ENCODE measurements at regions of chr3 and their contacts with region 1.

Region 1: DNA sequence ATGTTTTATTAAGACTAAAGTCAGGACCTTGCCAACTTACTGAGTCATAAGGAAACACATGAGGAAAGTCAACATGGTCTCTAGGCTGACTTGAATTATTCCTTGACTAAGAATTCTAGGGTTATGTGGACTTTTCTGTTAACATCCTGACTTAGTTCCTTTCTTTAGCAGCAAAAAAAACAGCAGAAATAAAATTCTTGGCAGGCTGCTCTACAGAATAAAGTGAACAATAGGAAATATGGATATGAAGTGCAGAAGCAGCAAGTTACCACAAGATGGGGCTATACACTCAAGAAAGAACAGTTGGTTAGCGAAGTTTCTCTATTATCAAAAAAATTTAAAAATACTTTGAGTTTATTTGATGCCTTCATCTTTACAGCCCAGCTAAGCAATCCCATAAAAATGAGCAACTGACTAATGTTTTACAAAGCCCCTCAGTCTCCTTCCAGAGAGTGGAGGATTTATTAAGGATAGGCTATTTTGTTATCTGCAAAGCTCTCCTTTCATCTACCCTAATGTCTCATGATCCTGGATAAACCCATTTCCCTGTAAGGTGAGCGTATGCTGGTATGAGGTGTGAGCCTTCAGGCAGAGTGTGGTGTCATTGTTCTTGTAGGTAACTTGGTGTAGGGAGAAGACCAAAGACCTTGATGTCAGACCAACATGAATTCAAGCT is 23.1 kb upstream of the MCCC1 start:
- DNase-seq: peak; percentile 70
- ATAC-seq: peak; percentile 60
- H3K4me3 ChIP-seq: no peak overlapping the region
- H3K4me3 Mint-ChIP-seq: no peak overlapping the region
- H3K27ac ChIP-seq: no peak overlapping the region
- H3K27ac Mint-ChIP-seq: no peak overlapping the region
- H3K4me1 ChIP-seq: no peaks in the 10 kb centered on the region
- H3K4me1 Mint-ChIP-seq: peaks cover under 1% of the 10 kb centered on the region
- H3K27me3 ChIP-seq: peaks cover 0 to 45% (median 33%) of the 10 kb centered on the region in 4 experiments
- H3K27me3 Mint-ChIP-seq: peaks cover 50% of the 10 kb centered on the region
- CTCF ChIP-seq: peak; percentile 97

Region 2: GRCh38 chr3:183178629-183179549 is 56.5 kb after region 1 on chr3:
- CTCF ChIA-PET with region 1: interaction called, 72 read pairs
- POLR2A ChIA-PET with region 1: no interaction called
- intact Hi-C with region 1: no loop called
- DNase-seq: peak; percentile 52
- ATAC-seq: peak; percentile 51
- H3K4me3 ChIP-seq: peak overlapping the region in 3 of 5 experiments; percentile 11 to 23 (median 15)
- H3K4me3 Mint-ChIP-seq: peak overlapping the region; percentile 82
- H3K27ac ChIP-seq: no peak overlapping the region
- H3K27ac Mint-ChIP-seq: no peak overlapping the region
- H3K4me1 ChIP-seq: peaks cover 18 to 24% of the 10 kb centered on the region in 2 donors
- H3K4me1 Mint-ChIP-seq: peaks cover 14% of the 10 kb centered on the region
- H3K27me3 ChIP-seq: peaks cover 0 to 75% (median 58%) of the 10 kb centered on the region in 4 experiments
- H3K27me3 Mint-ChIP-seq: peaks cover 62% of the 10 kb centered on the region
- CTCF ChIP-seq: no peak

Region 3: GRCh38 chr3:183188895-183189462 is 66.6 kb after region 1 on chr3:
- CTCF ChIA-PET with region 1: interaction called, 72 read pairs
- POLR2A ChIA-PET with region 1: no interaction called
- intact Hi-C with region 1: loop called (anchors 1 kb)
- DNase-seq: peak; percentile 52
- ATAC-seq: peak; percentile 49
- H3K4me3 ChIP-seq: no peak overlapping the region
- H3K4me3 Mint-ChIP-seq: no peak overlapping the region
- H3K27ac ChIP-seq: no peak overlapping the region
- H3K27ac Mint-ChIP-seq: no peak overlapping the region
- H3K4me1 ChIP-seq: peaks cover 0 to 2% of the 10 kb centered on the region in 2 donors
- H3K4me1 Mint-ChIP-seq: peaks cover 4% of the 10 kb centered on the region
- H3K27me3 ChIP-seq: peaks cover 0 to 51% (median 14%) of the 10 kb centered on the region in 4 experiments
- H3K27me3 Mint-ChIP-seq: peaks cover 57% of the 10 kb centered on the region
- CTCF ChIP-seq: peak; percentile 15

Region 4: GRCh38 chr3:183252973-183253901 is 130.8 kb after region 1 on chr3 and contains the start of gene B3GNT5:
- CTCF ChIA-PET with region 1: no interaction called
- POLR2A ChIA-PET with region 1: no interaction called
- intact Hi-C with region 1: loop called (anchors 10 kb)
- DNase-seq: peak; percentile 55
- ATAC-seq: peak; percentile 40
- H3K4me3 ChIP-seq: peak within 1 kb of the TSS; percentile 38 to 69 (median 53)
- H3K4me3 Mint-ChIP-seq: peak within 1 kb of the TSS; percentile 80
- H3K27ac ChIP-seq: no peak within 1 kb of the TSS
- H3K27ac Mint-ChIP-seq: no peak within 1 kb of the TSS
- H3K4me1 ChIP-seq: peaks cover 12 to 18% of the 10 kb centered on the region in 2 donors
- H3K4me1 Mint-ChIP-seq: peaks cover 10% of the 10 kb centered on the region
- H3K27me3 ChIP-seq: peaks cover 0 to 55% (median 42%) of the 10 kb centered on the region in 4 experiments
- H3K27me3 Mint-ChIP-seq: peaks cover 53% of the 10 kb centered on the region
- CTCF ChIP-seq: no peak
- total RNA-seq, gene B3GNT5: 0.37 TPM in 1 of 2 replicates, not detected in the other

Measured in B cell (primary cell).